ENCODE measurements at regions of chr19 and their contacts with region 1.

Region 1: DNA sequence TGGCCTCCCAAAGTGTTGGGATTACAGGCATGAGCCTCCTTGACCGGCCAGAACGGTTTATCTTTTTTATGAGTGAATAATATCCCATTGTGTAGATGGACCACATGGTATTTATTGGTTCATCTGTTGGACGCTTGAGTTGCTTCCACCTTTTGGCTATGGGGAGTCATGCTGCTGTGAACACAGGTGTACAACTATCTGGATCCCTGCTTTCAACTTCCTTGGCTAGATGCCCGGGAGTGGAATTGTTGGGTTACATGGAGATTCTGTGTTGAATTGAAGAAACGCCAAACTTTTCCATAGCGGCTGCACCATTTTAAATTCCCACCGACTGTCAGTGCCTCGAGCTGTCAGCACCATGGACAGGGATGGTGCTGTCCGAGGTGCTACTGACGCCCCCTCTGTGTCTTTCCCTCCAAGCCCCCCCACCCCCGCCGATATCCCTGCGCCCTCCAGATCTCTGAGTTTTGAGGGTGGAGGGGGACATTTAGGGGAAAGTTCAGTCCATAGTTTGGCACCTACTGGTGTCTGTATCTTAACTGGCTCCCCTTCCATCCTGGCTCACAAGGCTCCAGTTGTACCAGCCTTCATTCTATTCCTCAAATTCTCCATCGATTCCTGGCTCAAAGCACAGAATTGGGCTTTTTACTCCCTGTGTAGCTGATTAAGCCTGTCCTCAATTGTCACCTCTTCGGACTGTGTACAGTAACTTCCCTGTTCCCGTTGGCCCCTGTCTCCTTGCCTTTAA is 27.3 kb downstream of the PNPLA6 start:
- DNase-seq: no peak
- H3K4me3 Mint-ChIP-seq: no peak overlapping the region
- H3K27ac Mint-ChIP-seq: no peak overlapping the region
- H3K4me1 Mint-ChIP-seq: no peaks in the 10 kb centered on the region
- H3K27me3 Mint-ChIP-seq: no peaks in the 10 kb centered on the region

Region 2: DNA sequence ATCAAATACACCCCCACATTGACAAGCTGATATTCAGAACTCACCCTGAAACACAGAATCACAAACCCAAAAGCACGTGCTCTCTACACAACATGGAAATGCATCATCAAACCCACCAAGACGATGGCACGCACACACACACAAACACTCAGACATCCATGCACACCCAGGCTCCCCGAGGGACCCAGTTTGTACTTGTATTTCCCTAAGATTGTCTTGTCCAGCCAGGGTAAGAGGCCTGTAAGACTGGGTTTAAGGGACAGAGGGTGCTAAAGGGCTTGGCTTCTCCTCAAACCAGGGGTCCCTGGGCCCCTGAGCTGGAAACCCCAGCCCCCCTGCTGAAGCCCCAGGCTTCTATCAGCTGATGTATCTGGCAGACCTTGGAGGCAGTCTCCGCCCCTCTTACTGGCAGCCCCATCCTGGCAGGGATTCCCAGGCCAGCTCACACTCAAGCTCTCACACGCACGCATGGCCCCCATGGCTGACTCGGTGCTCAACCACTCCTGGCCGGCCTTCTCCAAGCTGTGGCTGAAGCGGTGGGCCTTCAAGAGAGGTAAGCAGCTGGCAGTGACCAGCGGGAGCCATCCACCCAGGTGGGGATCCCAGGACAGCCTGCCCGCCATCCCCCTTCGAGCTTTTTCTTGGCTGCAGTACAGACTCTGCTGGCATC is 207.5 kb before region 1 on chr19:
- CTCF ChIA-PET with region 1: interaction called, 16 read pairs
- POLR2A ChIA-PET with region 1: no interaction called
- intact Hi-C with region 1: no loop called
- DNase-seq: no peak
- H3K4me3 Mint-ChIP-seq: no peak overlapping the region
- H3K27ac Mint-ChIP-seq: no peak overlapping the region
- H3K4me1 Mint-ChIP-seq: peaks cover 35% of the 10 kb centered on the region
- H3K27me3 Mint-ChIP-seq: no peaks in the 10 kb centered on the region

Region 3: GRCh38 chr19:7535035-7535992 is 27.5 kb before region 1 on chr19 and contains the start of gene PNPLA6:
- CTCF ChIA-PET with region 1: interaction called, 5 read pairs
- POLR2A ChIA-PET with region 1: no interaction called
- intact Hi-C with region 1: loop called (anchors 2 kb)
- DNase-seq: peak; percentile 95
- H3K4me3 Mint-ChIP-seq: peak within 1 kb of the TSS; percentile 94
- H3K27ac Mint-ChIP-seq: peak within 1 kb of the TSS; percentile 85
- H3K4me1 Mint-ChIP-seq: peaks cover 15% of the 10 kb centered on the region
- H3K27me3 Mint-ChIP-seq: no peaks in the 10 kb centered on the region
- total RNA-seq, gene PNPLA6: 106 to 121 TPM

Region 4: DNA sequence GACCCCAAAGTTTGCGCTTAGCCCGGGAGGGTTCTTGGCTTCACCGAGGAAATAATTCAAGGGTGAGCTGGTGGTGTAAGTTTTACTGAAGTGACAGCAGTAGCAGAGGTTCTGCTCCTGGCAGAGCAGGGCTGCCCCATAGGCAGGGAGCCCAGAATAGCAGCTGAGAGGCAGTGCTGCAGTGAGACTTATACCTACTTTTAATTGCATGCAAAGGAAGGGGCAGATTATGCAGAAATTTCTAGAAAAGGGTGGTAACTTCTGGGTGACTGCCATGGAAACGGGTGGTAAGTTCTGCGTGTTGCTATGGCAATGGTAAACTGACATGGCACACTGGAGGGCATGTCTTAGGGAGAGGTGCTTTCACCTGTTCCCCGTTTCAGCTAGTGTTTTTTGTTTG is 15.3 kb after region 1 on chr19:
- CTCF ChIA-PET with region 1: interaction called, 24 read pairs
- POLR2A ChIA-PET with region 1: no interaction called
- intact Hi-C with region 1: no loop called
- DNase-seq: no peak
- H3K4me3 Mint-ChIP-seq: no peak overlapping the region
- H3K27ac Mint-ChIP-seq: no peak overlapping the region
- H3K4me1 Mint-ChIP-seq: no peaks in the 10 kb centered on the region
- H3K27me3 Mint-ChIP-seq: peaks cover 7% of the 10 kb centered on the region

Region 5: GRCh38 chr19:7629347-7630054 is 66.7 kb after region 1 on chr19 and contains the starts of genes PET100 and XAB2:
- CTCF ChIA-PET with region 1: interaction called, 17 read pairs
- POLR2A ChIA-PET with region 1: no interaction called
- intact Hi-C with region 1: no loop called
- DNase-seq: peak; percentile 97
- H3K4me3 Mint-ChIP-seq: peak within 1 kb of the TSS; percentile 96
- H3K27ac Mint-ChIP-seq: peak within 1 kb of the TSS; percentile 93
- H3K4me1 Mint-ChIP-seq: peaks cover 33% of the 10 kb centered on the region
- H3K27me3 Mint-ChIP-seq: no peaks in the 10 kb centered on the region
- total RNA-seq, gene PET100: 106 to 114 TPM
- total RNA-seq, gene XAB2: 50.0 to 52.4 TPM

Region 6: DNA sequence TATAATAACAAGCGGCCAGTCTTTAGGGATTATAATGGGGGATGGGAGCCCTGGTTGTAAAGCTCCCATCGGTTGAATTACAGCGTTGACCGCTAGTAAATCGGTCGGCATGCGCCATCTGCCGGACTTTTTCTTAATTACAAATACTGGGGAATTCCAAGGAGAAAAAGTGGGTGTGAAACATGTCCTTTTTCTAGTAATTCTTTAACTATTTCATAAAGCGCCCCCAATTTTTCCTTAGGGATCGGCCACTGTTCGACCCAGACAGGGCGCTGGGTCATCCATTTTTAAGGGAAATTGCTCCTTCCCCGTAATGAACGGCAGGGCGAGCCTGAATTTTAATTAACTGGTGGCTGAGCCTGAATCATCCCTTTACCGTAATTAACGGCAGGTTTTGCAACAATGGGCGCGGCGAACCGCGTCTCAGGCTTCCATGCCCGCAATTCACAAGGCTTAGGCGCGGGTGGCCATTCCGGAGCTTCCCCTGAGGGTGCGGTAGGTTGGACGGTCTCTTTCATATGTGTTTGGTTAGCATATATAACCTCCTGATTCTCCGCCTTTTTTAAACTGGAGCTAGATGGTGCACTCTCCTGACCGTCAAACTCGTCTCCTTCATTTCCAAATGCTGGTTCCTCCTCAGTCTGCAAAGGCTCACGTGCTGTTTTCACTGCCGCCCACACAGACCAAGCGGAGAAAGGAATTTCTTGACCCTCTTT is 237.0 kb after region 1 on chr19:
- CTCF ChIA-PET with region 1: interaction called, 64 read pairs
- POLR2A ChIA-PET with region 1: no interaction called
- intact Hi-C with region 1: loop called (anchors 1 kb)
- DNase-seq: peak; percentile 69
- H3K4me3 Mint-ChIP-seq: peak overlapping the region; percentile 39
- H3K27ac Mint-ChIP-seq: no peak overlapping the region
- H3K4me1 Mint-ChIP-seq: peaks cover 7% of the 10 kb centered on the region
- H3K27me3 Mint-ChIP-seq: peaks cover 25% of the 10 kb centered on the region